ENCODE measurements at regions of chr20 and their contacts with region 1.

Region 1: GRCh38 chr20:48718857-48719578 is 108.8 kb downstream of the PREX1 start:
- DNase-seq: peak; percentile 36 to 63 (median 41)
- H3K4me3 ChIP-seq: peak overlapping the region in 1 of 2 donors; percentile 26
- H3K4me3 Mint-ChIP-seq: peak overlapping the region; percentile 41 to 83 (median 76)
- H3K27ac ChIP-seq: peak overlapping the region; percentile 41
- H3K27ac Mint-ChIP-seq: peak overlapping the region; percentile 90 to 95 (median 92)
- H3K4me1 ChIP-seq: peaks cover 100% of the 10 kb centered on the region
- H3K4me1 Mint-ChIP-seq: peaks cover 83 to 99% (median 91%) of the 10 kb centered on the region in 4 donors
- H3K27me3 ChIP-seq: no peaks in the 10 kb centered on the region
- H3K27me3 Mint-ChIP-seq: no peaks in the 10 kb centered on the region

Region 2: DNA sequence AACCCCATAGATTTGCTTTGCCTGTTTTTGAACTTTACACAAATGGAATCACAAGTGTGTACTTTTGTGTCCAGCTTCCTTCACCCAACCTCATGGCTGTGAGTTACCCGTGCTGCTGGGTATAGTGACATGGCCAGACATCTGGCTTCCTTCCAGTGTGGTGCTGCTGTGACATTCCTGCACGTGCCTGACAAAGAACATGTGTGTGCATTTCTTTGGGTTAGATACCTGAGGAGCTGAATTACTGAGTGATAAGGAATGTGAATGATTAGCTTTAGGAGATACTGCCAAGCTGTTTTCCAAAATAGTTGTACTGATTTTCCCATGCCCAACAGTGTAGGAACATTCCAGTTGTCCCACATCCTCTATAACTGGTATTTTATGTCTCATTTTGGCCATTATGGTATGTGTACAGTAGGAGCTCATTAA is 23.8 kb before region 1 on chr20:
- CTCF ChIA-PET with region 1: no interaction called
- POLR2A ChIA-PET with region 1: no interaction called
- intact Hi-C with region 1: no loop called
- DNase-seq: no peak
- H3K4me3 ChIP-seq: no peak overlapping the region
- H3K4me3 Mint-ChIP-seq: no peak overlapping the region
- H3K27ac ChIP-seq: no peak overlapping the region
- H3K27ac Mint-ChIP-seq: peak overlapping the region in 4 of 7 donors; percentile 47 to 90 (median 76)
- H3K4me1 ChIP-seq: no peaks in the 10 kb centered on the region
- H3K4me1 Mint-ChIP-seq: peaks cover 15 to 41% (median 28%) of the 10 kb centered on the region in 4 donors
- H3K27me3 ChIP-seq: no peaks in the 10 kb centered on the region
- H3K27me3 Mint-ChIP-seq: no peaks in the 10 kb centered on the region

Region 3: DNA sequence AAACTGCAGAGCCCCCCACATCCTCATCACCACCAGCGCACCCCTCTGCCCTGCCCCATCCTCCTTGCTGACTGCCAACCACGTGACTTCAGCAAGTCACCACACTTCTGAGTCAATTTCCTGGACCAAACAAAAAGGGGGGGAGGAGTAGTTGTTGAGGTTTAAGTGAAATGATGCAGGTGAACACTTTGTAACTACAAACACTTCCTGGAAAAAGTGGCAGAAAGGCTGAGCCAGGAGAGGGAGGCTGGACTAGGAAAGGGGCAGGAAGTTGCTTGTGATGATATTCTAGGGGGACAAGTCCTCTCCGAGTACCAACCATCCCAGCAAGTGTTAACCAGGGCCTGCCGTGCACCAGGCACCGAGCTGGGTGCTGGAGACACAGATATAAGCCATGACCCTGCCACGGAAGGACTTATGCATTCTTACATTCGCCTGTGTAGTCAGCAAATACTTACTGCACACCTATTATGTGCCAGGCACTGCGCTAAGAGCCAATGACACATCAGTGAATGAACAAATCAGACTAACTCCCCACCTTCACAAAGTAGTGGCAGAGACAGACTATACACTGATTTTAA is 41.5 kb after region 1 on chr20:
- CTCF ChIA-PET with region 1: no interaction called
- POLR2A ChIA-PET with region 1: interaction called, 3 read pairs
- intact Hi-C with region 1: loop called (anchors 5 kb)
- DNase-seq: peak; percentile 82 to 92 (median 84)
- H3K4me3 ChIP-seq: peak overlapping the region; percentile 20 to 54
- H3K4me3 Mint-ChIP-seq: peak overlapping the region; percentile 70 to 89 (median 85)
- H3K27ac ChIP-seq: peak overlapping the region; percentile 86
- H3K27ac Mint-ChIP-seq: peak overlapping the region; percentile 87 to 99 (median 98)
- H3K4me1 ChIP-seq: peaks cover 87% of the 10 kb centered on the region
- H3K4me1 Mint-ChIP-seq: peaks cover 64 to 97% (median 82%) of the 10 kb centered on the region in 4 donors
- H3K27me3 ChIP-seq: no peaks in the 10 kb centered on the region
- H3K27me3 Mint-ChIP-seq: no peaks in the 10 kb centered on the region

Region 4: DNA sequence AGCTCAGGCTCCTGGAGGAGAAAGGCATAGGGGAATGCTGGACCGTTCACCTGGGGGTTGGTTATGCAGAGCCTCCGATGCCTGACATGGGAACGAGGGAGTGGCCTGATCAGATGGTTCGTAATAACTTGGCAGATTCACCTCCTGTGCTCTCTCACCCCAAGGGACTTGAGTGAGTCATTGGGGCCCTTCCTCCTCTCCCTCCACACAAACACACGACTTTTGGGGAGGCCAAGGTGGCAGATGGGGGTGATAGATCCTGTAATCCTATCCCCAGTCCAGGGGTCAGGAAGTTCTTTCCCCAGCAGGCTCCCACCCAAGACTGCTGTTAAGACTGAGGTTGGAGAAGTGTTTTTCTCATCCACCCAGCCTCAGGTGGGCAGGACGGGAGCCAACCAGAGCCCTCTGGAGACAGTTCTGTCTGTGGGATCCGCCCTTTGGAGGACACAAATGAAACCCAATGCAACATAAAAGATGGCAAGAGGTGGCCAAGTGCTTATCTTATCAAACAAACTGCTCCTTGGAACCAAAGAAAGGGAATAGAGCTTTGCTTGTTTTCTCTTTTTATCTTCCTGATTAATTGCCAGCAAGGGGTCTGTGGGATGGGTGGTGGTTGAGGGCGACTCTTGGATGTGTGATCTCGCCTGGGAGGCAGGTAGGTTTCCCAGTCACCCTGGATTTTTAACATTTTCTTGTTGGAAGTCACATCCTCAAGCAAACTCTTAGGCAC is 157.1 kb after region 1 on chr20:
- CTCF ChIA-PET with region 1: interaction called, 12 read pairs
- POLR2A ChIA-PET with region 1: no interaction called
- intact Hi-C with region 1: no loop called
- DNase-seq: no peak
- H3K4me3 ChIP-seq: no peak overlapping the region
- H3K4me3 Mint-ChIP-seq: no peak overlapping the region
- H3K27ac ChIP-seq: no peak overlapping the region
- H3K27ac Mint-ChIP-seq: peak overlapping the region in 4 of 7 donors; percentile 18 to 59 (median 41)
- H3K4me1 ChIP-seq: peaks cover 7% of the 10 kb centered on the region
- H3K4me1 Mint-ChIP-seq: peaks cover 9 to 13% (median 9%) of the 10 kb centered on the region in 4 donors
- H3K27me3 ChIP-seq: no peaks in the 10 kb centered on the region
- H3K27me3 Mint-ChIP-seq: no peaks in the 10 kb centered on the region

Region 5: DNA sequence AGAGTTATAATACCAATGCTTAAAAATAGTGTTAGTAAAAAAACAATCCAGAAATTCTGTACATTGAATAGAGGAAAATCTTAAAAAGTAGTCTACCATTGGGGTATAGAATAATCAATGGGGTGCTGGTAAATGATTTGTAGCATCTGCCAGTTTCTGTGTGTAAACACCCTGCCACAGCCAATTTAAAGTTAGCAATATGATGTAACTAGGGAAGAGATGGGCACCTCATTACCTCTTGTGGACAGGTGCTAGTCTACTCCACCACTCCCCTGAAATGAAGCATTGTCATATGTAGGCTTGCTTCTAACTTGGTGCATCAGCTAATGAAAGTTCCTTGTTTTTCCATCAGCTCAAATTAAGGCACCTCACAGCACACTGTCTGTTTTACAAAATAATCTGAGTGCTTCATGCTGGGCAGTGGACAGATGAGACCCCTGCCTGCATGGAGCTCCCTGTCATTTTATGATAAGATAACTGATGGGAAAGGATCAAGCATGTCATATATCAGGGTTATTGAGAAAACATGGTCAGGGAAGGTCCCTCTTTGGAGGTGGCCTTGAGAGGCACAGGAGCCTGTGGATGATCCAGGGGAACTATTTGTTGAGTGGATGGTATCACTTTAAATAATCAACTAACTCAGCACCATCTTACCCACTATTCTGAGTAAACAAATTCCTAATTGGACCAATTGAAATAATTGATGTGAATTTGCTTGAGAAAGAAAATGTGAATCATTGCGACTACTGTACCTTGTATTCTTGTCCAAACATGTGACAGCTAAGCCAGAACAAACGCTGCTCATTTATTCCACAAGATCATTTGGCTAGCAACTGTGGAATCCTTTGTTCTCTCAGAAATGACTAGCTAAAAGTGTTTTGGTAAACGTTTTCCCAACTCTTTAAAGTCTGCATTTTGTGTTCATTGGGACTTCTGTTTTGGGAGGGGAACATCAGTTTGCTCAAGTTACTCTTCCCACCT is 281.2 kb after region 1 on chr20:
- CTCF ChIA-PET with region 1: no interaction called
- POLR2A ChIA-PET with region 1: no interaction called
- intact Hi-C with region 1: no loop called
- DNase-seq: no peak
- H3K4me3 ChIP-seq: no peak overlapping the region
- H3K4me3 Mint-ChIP-seq: no peak overlapping the region
- H3K27ac ChIP-seq: no peak overlapping the region
- H3K27ac Mint-ChIP-seq: peak overlapping the region in 2 of 7 donors; percentile 22 to 76
- H3K4me1 ChIP-seq: no peaks in the 10 kb centered on the region
- H3K4me1 Mint-ChIP-seq: no peaks in the 10 kb centered on the region
- H3K27me3 ChIP-seq: no peaks in the 10 kb centered on the region
- H3K27me3 Mint-ChIP-seq: no peaks in the 10 kb centered on the region